Naive thymus-derived CD4-positive, alpha-beta T cell (primary cell): ENCODE measurements at regions of chr7 and their contacts with region 1.

Region 1: GRCh38 chr7:111074071-111074747 is 16.7 kb upstream of the LRRN3 start:
- DNase-seq: no peak
- ATAC-seq: no peak
- H3K4me3 ChIP-seq: no peak overlapping the region
- H3K4me3 Mint-ChIP-seq: peak overlapping the region in 6 of 10 donors; percentile 11 to 40 (median 19)
- H3K27ac ChIP-seq: no peak overlapping the region
- H3K27ac Mint-ChIP-seq: peak overlapping the region in 4 of 9 donors; percentile 4 to 78 (median 34)
- H3K4me1 ChIP-seq: peaks cover 5 to 34% of the 10 kb centered on the region in 2 donors
- H3K4me1 Mint-ChIP-seq: peaks cover 10 to 82% (median 73%) of the 10 kb centered on the region in 7 donors
- H3K27me3 ChIP-seq: no peaks in the 10 kb centered on the region
- H3K27me3 Mint-ChIP-seq: no peaks in the 10 kb centered on the region

Region 2: GRCh38 chr7:111059833-111060232 is 14.4 kb before region 1 on chr7:
- CTCF ChIA-PET with region 1: interaction called, 3 read pairs
- POLR2A ChIA-PET with region 1: no interaction called
- intact Hi-C with region 1: loop called in 1 of 2 experiments (anchors 1 kb)
- DNase-seq: no peak
- ATAC-seq: no peak
- H3K4me3 ChIP-seq: no peak overlapping the region
- H3K4me3 Mint-ChIP-seq: no peak overlapping the region
- H3K27ac ChIP-seq: no peak overlapping the region
- H3K27ac Mint-ChIP-seq: no peak overlapping the region
- H3K4me1 ChIP-seq: no peaks in the 10 kb centered on the region
- H3K4me1 Mint-ChIP-seq: peaks cover 4 to 45% (median 26%) of the 10 kb centered on the region in 7 donors
- H3K27me3 ChIP-seq: no peaks in the 10 kb centered on the region
- H3K27me3 Mint-ChIP-seq: no peaks in the 10 kb centered on the region

Region 3: GRCh38 chr7:111339006-111339405 is 264.8 kb after region 1 on chr7:
- CTCF ChIA-PET with region 1: no interaction called
- POLR2A ChIA-PET with region 1: no interaction called
- intact Hi-C with region 1: no loop called
- DNase-seq: no peak
- ATAC-seq: no peak
- H3K4me3 ChIP-seq: no peak overlapping the region
- H3K4me3 Mint-ChIP-seq: no peak overlapping the region
- H3K27ac ChIP-seq: no peak overlapping the region
- H3K27ac Mint-ChIP-seq: no peak overlapping the region
- H3K4me1 ChIP-seq: no peaks in the 10 kb centered on the region
- H3K4me1 Mint-ChIP-seq: no peaks in the 10 kb centered on the region
- H3K27me3 ChIP-seq: no peaks in the 10 kb centered on the region
- H3K27me3 Mint-ChIP-seq: no peaks in the 10 kb centered on the region